GM10248 (cell line): ENCODE measurements at regions of chr6 and their contacts with region 1.

Region 1: GRCh38 chr6:82160255-82160990 is 87.1 kb downstream of the IBTK start:
- DNase-seq: no peak
- CTCF ChIP-seq: no peak

Region 2: GRCh38 chr6:82172594-82172993 is 12.2 kb after region 1 on chr6:
- CTCF ChIA-PET with region 1: interaction called, 10 read pairs
- POLR2A ChIA-PET with region 1: no interaction called
- DNase-seq: no peak
- CTCF ChIP-seq: no peak

Region 3: DNA sequence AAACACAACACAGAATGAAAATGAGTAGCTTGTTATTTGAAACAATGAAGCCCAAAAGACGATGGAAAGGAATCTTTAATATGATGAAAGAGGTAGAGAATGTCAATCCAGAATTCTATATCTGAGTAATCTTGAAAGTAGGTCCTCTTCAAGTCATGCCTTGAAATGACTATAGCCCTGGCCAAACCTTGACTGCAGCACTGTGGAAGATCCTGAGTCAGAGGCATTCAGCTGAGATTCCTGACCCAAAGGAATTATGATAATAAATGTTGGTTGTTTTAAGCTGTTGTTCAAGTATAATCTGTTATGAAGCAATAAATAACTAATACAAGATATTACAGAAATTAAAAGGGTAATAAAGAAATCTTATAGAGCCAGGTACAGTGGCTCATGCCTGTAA is 22.3 kb after region 1 on chr6:
- CTCF ChIA-PET with region 1: no interaction called
- POLR2A ChIA-PET with region 1: no interaction called
- DNase-seq: no peak
- CTCF ChIP-seq: no peak